ENCODE measurements at regions of chr7 and their contacts with region 1.

Region 1: DNA sequence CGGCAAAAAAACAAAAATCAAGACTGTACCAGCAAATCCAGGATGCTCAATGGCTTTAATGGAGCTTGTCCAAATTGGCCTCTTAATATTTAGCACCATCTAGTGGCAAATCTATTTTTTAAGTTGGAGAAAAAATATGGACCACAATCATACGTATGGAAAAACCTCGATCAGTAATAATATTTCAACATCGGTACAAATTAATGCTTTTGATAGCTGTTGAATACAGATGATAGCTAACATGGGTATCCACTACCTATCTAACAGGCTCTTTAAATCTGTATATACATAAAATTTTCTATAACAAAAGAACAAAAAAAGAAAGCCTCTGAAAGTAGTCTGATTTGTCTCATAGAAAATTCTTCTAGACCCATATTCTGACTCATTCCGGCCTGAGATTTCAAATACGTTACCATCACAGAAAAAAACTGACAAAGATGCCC is 29.2 kb downstream of the COA1 start:
- DNase-seq: peak; percentile 46
- H3K4me3 ChIP-seq: no peak overlapping the region
- H3K27ac ChIP-seq: no peak overlapping the region
- H3K4me1 ChIP-seq: peaks cover 2% of the 10 kb centered on the region
- H3K27me3 ChIP-seq: no peaks in the 10 kb centered on the region
- CTCF ChIP-seq: peak; percentile 50 to 60

Region 2: DNA sequence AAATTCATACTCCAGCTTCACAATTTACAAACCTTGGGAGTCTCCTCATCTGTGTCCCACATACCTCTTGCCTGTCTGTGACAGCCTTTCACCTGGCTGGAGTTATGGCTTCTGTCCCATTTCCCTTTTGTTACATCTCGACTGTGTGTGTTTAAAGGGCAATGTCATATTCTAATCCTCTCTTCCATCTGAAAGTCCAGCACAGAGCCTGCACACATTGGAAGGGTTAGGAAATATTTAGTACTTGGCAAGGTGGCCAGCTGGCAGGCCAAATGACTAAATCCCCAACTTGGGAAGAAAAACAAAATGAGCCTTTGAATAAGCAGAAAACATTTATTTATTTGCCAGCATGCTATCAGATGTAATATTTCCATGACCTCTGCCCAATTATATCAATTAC is 237.2 kb before region 1 on chr7:
- CTCF ChIA-PET with region 1: no interaction called
- dilution Hi-C with region 1: no loop called
- in situ Hi-C with region 1: no loop called
- intact Hi-C with region 1: loop called (anchors 5 kb)
- DNase-seq: no peak
- H3K4me3 ChIP-seq: no peak overlapping the region
- H3K27ac ChIP-seq: no peak overlapping the region
- H3K4me1 ChIP-seq: peaks cover 28% of the 10 kb centered on the region
- H3K27me3 ChIP-seq: no peaks in the 10 kb centered on the region
- CTCF ChIP-seq: no peak

Region 3: GRCh38 chr7:43639858-43640491 is 60.1 kb before region 1 on chr7:
- CTCF ChIA-PET with region 1: no interaction called
- dilution Hi-C with region 1: no loop called
- in situ Hi-C with region 1: no loop called
- intact Hi-C with region 1: loop called (anchors 2 kb)
- DNase-seq: peak; percentile 46
- H3K4me3 ChIP-seq: no peak overlapping the region
- H3K27ac ChIP-seq: peak overlapping the region; percentile 73
- H3K4me1 ChIP-seq: peaks cover 50% of the 10 kb centered on the region
- H3K27me3 ChIP-seq: no peaks in the 10 kb centered on the region
- CTCF ChIP-seq: no peak

Region 4: GRCh38 chr7:43647673-43648472 is 52.2 kb before region 1 on chr7:
- CTCF ChIA-PET with region 1: interaction called, 4 read pairs
- dilution Hi-C with region 1: no loop called
- in situ Hi-C with region 1: no loop called
- intact Hi-C with region 1: loop called (anchors 1 kb)
- DNase-seq: peak; percentile 97
- H3K4me3 ChIP-seq: peak overlapping the region in 1 of 3 experiments; percentile 26
- H3K27ac ChIP-seq: peak overlapping the region; percentile 91
- H3K4me1 ChIP-seq: peaks cover 59% of the 10 kb centered on the region
- H3K27me3 ChIP-seq: no peaks in the 10 kb centered on the region
- CTCF ChIP-seq: no peak

Region 5: GRCh38 chr7:43784030-43785001 is 84.2 kb after region 1 on chr7:
- CTCF ChIA-PET with region 1: no interaction called
- dilution Hi-C with region 1: no loop called
- in situ Hi-C with region 1: no loop called
- intact Hi-C with region 1: no loop called
- DNase-seq: no peak
- H3K4me3 ChIP-seq: no peak overlapping the region
- H3K27ac ChIP-seq: no peak overlapping the region
- H3K4me1 ChIP-seq: peaks cover 9% of the 10 kb centered on the region
- H3K27me3 ChIP-seq: no peaks in the 10 kb centered on the region
- CTCF ChIP-seq: no peak